HepG2 (cell line): ENCODE measurements at regions of chr1 and their contacts with region 1.

Region 1: GRCh38 chr1:37434292-37434907 is 40.0 kb upstream of the ZC3H12A start:
- DNase-seq: peak; percentile 25
- ATAC-seq: peak; percentile 92
- H3K4me3 ChIP-seq: no peak overlapping the region
- H3K27ac ChIP-seq: no peak overlapping the region
- H3K4me1 ChIP-seq: no peaks in the 10 kb centered on the region
- H3K27me3 ChIP-seq: peaks cover 5 to 66% of the 10 kb centered on the region in 2 experiments; a peak in 4 of 5 replicates
- CTCF ChIP-seq: peak; percentile 94
- EP300 ChIP-seq: no peak
- POLR2A ChIP-seq: no peak
- RAD21 ChIP-seq: peak; percentile 86

Region 2: GRCh38 chr1:36516372-36517325 is 917.8 kb before region 1 on chr1:
- CTCF ChIA-PET with region 1: no interaction called
- POLR2A ChIA-PET with region 1: no interaction called
- in situ Hi-C with region 1: no loop called
- intact Hi-C with region 1: loop called (anchors 5 kb)
- DNase-seq: peak; percentile 60
- ATAC-seq: peak; percentile 84
- H3K4me3 ChIP-seq: peak overlapping the region in 1 of 3 experiments; percentile 23; a peak in 1 of 6 replicates
- H3K27ac ChIP-seq: no peak overlapping the region
- H3K4me1 ChIP-seq: peaks cover 41% of the 10 kb centered on the region
- H3K27me3 ChIP-seq: peaks cover 1 to 5% of the 10 kb centered on the region in 2 experiments; a peak in 2 of 5 replicates
- CTCF ChIP-seq: peak; percentile 96
- EP300 ChIP-seq: no peak
- POLR2A ChIP-seq: no peak
- RAD21 ChIP-seq: peak; percentile 83

Region 3: DNA sequence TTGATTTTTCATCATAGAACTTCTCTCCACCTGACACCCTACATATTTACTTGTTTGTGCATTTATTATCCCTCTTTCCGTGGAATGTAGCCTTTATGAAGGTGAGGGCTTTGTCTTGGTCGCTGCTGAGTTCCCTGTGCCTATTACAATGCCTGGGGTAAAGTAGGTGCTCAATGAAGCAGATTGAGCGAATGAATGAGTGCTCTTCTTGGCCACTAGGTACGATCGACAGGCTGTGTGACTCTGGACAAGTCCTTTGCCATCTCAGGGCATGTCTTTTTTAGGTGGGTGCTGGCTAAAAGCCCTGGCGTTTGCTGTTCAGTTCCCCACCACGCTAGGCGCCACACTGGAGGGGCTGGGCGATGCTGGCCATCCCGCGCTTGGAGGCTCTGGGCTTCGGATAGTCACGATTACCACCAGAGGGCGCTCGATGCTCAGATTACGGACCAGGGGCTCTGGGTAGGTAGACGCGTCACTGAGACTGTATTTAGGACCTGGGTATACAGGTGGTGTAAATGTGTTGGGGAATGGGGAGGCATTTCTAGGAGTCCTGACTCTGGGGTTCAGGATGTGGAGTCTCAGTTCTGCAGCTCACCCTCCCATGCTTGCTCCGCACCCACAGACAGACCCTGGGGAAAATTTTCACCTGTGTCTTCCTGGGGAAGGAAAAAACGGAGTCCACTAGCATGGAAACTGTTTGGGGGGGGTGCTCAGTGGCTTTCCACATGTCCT is 880.6 kb before region 1 on chr1:
- CTCF ChIA-PET with region 1: interaction called, 3 read pairs
- POLR2A ChIA-PET with region 1: no interaction called
- in situ Hi-C with region 1: loop called (anchors 10 kb)
- intact Hi-C with region 1: no loop called
- DNase-seq: peak; percentile 59
- ATAC-seq: peak; percentile 99
- H3K4me3 ChIP-seq: no peak overlapping the region
- H3K27ac ChIP-seq: no peak overlapping the region
- H3K4me1 ChIP-seq: no peaks in the 10 kb centered on the region
- H3K27me3 ChIP-seq: peaks cover 0 to 17% of the 10 kb centered on the region in 2 experiments; a peak in 3 of 5 replicates
- CTCF ChIP-seq: peak; percentile 88
- EP300 ChIP-seq: no peak
- POLR2A ChIP-seq: no peak
- RAD21 ChIP-seq: peak; percentile 62; the same call in 1 of the 2 replicates

Region 4: GRCh38 chr1:36703526-36704208 is 730.7 kb before region 1 on chr1:
- CTCF ChIA-PET with region 1: interaction called, 7 read pairs
- POLR2A ChIA-PET with region 1: no interaction called
- in situ Hi-C with region 1: loop called (anchors 25 kb)
- intact Hi-C with region 1: no loop called
- DNase-seq: peak; percentile 57
- ATAC-seq: peak; percentile 95
- H3K4me3 ChIP-seq: no peak overlapping the region
- H3K27ac ChIP-seq: no peak overlapping the region
- H3K4me1 ChIP-seq: no peaks in the 10 kb centered on the region
- H3K27me3 ChIP-seq: peaks cover 2 to 12% of the 10 kb centered on the region in 2 experiments; a peak in 3 of 5 replicates
- CTCF ChIP-seq: peak; percentile 94
- EP300 ChIP-seq: no peak
- POLR2A ChIP-seq: no peak
- RAD21 ChIP-seq: peak; percentile 83

Region 5: DNA sequence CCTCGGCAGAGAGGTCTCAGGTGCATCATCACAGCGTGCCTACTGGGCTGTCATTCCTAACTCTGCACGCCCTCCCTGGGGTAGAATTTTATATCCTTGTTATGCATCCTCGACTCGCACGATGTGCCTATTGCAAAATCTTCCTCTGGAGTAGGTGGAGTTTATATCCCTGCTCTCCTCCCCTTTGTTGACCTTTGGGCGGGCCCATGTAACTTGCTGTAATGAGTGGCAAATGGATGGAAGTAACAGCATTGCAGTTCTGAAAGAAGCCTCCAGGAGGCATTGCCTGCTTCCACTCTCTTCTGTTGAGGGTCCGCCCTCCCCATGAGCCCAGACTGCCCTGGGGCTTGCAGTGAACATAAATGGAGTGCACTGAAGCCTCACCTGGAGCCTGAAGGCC is 337.9 kb before region 1 on chr1:
- CTCF ChIA-PET with region 1: no interaction called
- POLR2A ChIA-PET with region 1: no interaction called
- in situ Hi-C with region 1: no loop called
- intact Hi-C with region 1: loop called (anchors 5 kb)
- DNase-seq: peak; percentile 63
- ATAC-seq: peak; percentile 84
- H3K4me3 ChIP-seq: no peak overlapping the region
- H3K27ac ChIP-seq: no peak overlapping the region
- H3K4me1 ChIP-seq: no peaks in the 10 kb centered on the region
- H3K27me3 ChIP-seq: peaks cover 0 to 2% of the 10 kb centered on the region in 2 experiments; a peak in 1 of 5 replicates
- CTCF ChIP-seq: peak; percentile 40
- EP300 ChIP-seq: no peak
- POLR2A ChIP-seq: no peak
- RAD21 ChIP-seq: no peak

Region 6: DNA sequence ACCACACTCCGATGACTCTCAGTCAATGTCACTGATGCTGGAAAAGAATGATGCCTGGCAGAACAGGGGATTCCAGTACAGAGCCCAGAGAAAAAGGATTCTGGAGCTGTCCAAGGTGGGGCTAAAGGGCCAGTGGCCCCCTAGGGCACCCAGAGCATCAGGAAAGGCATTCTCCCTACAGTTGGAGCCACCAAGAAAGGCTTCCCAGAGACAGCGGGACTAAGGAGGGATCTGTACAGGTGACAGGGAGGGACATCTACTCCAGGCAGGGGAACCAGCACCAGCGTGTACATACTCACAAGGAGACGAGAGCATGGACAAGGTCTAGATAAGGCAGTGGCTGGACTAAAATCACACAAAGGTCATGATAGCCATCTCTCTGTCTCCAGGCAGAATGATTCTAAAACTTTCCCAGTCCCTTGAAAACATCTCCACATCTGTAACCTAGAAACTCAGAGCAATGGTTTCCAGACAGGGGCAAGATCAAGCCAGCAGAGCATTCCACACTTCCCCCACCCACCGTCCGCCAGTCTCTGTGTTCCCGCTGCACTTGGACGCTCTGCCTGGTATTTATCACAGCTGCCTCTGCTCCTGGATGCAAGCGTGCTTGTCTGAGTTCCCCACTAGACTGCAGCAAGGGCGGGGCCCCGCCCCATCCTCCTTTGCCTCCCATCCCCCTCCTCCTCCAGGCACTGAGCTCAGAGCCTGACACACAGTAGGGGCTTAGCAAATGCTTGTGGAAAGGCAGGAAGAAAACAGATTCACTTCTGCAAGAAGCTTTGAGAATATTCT is 71.6 kb before region 1 on chr1:
- CTCF ChIA-PET with region 1: no interaction called
- POLR2A ChIA-PET with region 1: no interaction called
- in situ Hi-C with region 1: no loop called
- intact Hi-C with region 1: no loop called
- DNase-seq: no peak
- ATAC-seq: no peak
- H3K4me3 ChIP-seq: no peak overlapping the region
- H3K27ac ChIP-seq: no peak overlapping the region
- H3K4me1 ChIP-seq: no peaks in the 10 kb centered on the region
- H3K27me3 ChIP-seq: peaks cover 2 to 19% of the 10 kb centered on the region in 2 experiments; a peak in 2 of 5 replicates
- CTCF ChIP-seq: no peak
- EP300 ChIP-seq: no peak
- POLR2A ChIP-seq: no peak
- RAD21 ChIP-seq: no peak

Region 7: GRCh38 chr1:37391211-37392011 is 43.0 kb before region 1 on chr1:
- CTCF ChIA-PET with region 1: no interaction called
- POLR2A ChIA-PET with region 1: no interaction called
- in situ Hi-C with region 1: no loop called
- intact Hi-C with region 1: no loop called
- DNase-seq: no peak
- ATAC-seq: peak; percentile 64
- H3K4me3 ChIP-seq: no peak overlapping the region
- H3K27ac ChIP-seq: no peak overlapping the region
- H3K4me1 ChIP-seq: no peaks in the 10 kb centered on the region
- H3K27me3 ChIP-seq: peaks cover 2 to 20% of the 10 kb centered on the region in 2 experiments; a peak in 2 of 5 replicates
- CTCF ChIP-seq: peak; percentile 27
- EP300 ChIP-seq: no peak
- POLR2A ChIP-seq: no peak
- RAD21 ChIP-seq: no peak

Region 8: GRCh38 chr1:37474046-37474759 is 39.8 kb after region 1 on chr1 and contains the start of gene ZC3H12A:
- CTCF ChIA-PET with region 1: no interaction called
- POLR2A ChIA-PET with region 1: no interaction called
- in situ Hi-C with region 1: no loop called
- intact Hi-C with region 1: no loop called
- DNase-seq: peak; percentile 78
- ATAC-seq: peak; percentile 51
- H3K4me3 ChIP-seq: peak within 1 kb of the TSS; percentile 70 to 85 (median 80)
- H3K27ac ChIP-seq: peak within 1 kb of the TSS; percentile 64
- H3K4me1 ChIP-seq: peaks cover 82% of the 10 kb centered on the region
- H3K27me3 ChIP-seq: no peaks in the 10 kb centered on the region; a peak in 1 of 5 replicates
- CTCF ChIP-seq: no peak
- EP300 ChIP-seq: peak in 1 of 2 experiments; percentile 32; a peak in 2 of 4 replicates
- POLR2A ChIP-seq: peak in 1 of 2 experiments; percentile 82; a peak in 2 of 4 replicates
- RAD21 ChIP-seq: peak; percentile 23; the same call in 1 of the 2 replicates
- total RNA-seq, gene ZC3H12A: 4.2 and 6.8 TPM in 2 replicates